ENCODE measurements at regions of chr7 and their contacts with region 1.

Region 1: DNA sequence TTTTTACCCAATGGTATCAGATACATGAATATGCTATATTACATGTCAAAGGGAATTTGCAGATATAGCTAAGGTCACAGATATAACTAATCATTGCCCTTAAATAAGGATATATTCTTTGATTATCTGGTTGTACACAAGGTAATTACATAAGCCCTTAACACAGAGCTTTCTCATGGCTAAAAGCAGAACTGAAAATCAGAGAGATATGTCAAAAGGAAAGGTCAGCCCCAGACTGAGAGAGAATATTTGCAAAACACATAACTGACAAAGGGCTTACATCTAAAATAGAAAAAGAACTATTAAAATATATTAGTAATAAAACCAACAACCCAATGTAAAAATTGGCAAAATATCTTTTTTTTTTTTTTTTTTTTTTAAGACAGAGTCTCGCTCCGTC is 1029.5 kb upstream of the LRRN3 start:
- DNase-seq: no peak
- ATAC-seq: no peak
- H3K4me3 ChIP-seq: no peak overlapping the region
- H3K27ac ChIP-seq: no peak overlapping the region
- H3K4me1 ChIP-seq: no peaks in the 10 kb centered on the region
- H3K27me3 ChIP-seq: no peaks in the 10 kb centered on the region
- CTCF ChIP-seq: no peak

Region 2: DNA sequence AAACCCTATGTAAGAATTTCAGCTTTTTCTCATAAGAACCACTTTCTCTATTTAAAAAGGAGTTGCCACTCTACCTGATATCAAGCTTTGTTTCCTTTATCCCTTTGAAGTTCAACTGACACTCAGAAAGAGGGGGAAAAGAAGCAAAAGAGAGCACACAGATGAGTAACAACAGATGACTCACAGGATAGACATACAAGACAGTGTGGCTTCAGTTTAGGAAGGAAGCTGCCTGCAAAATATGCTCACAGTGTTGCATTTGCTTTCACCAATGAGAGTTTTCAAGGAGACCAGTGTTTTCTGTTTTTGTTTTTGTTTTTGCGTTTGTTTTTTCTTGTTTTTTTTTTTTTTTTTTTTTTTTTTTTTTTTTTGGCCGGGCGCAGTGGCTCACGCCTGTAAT is 310.1 kb before region 1 on chr7:
- CTCF ChIA-PET with region 1: no interaction called
- POLR2A ChIA-PET with region 1: no interaction called
- in situ Hi-C with region 1: no loop called
- intact Hi-C with region 1: no loop called
- DNase-seq: no peak
- ATAC-seq: no peak
- H3K4me3 ChIP-seq: no peak overlapping the region
- H3K27ac ChIP-seq: no peak overlapping the region
- H3K4me1 ChIP-seq: no peaks in the 10 kb centered on the region
- H3K27me3 ChIP-seq: no peaks in the 10 kb centered on the region
- CTCF ChIP-seq: no peak

Region 3: GRCh38 chr7:110336423-110336822 is 275.0 kb after region 1 on chr7:
- CTCF ChIA-PET with region 1: interaction called, 11 read pairs
- POLR2A ChIA-PET with region 1: no interaction called
- in situ Hi-C with region 1: no loop called
- intact Hi-C with region 1: no loop called
- DNase-seq: no peak
- ATAC-seq: no peak
- H3K4me3 ChIP-seq: no peak overlapping the region
- H3K27ac ChIP-seq: no peak overlapping the region
- H3K4me1 ChIP-seq: no peaks in the 10 kb centered on the region
- H3K27me3 ChIP-seq: no peaks in the 10 kb centered on the region
- CTCF ChIP-seq: no peak